Prostate gland (tissue), 2 donors: ENCODE measurements at regions of chr7 and their contacts with region 1.

Region 1: GRCh38 chr7:32803406-32804141 is 88.0 kb downstream of the KBTBD2 start:
- DNase-seq: no peak
- H3K4me3 ChIP-seq: no peak overlapping the region
- H3K27ac ChIP-seq: no peak overlapping the region
- H3K4me1 ChIP-seq: no peaks in the 10 kb centered on the region
- H3K27me3 ChIP-seq: no peaks in the 10 kb centered on the region
- CTCF ChIP-seq: no peak
- POLR2A ChIP-seq: no peak

Region 2: DNA sequence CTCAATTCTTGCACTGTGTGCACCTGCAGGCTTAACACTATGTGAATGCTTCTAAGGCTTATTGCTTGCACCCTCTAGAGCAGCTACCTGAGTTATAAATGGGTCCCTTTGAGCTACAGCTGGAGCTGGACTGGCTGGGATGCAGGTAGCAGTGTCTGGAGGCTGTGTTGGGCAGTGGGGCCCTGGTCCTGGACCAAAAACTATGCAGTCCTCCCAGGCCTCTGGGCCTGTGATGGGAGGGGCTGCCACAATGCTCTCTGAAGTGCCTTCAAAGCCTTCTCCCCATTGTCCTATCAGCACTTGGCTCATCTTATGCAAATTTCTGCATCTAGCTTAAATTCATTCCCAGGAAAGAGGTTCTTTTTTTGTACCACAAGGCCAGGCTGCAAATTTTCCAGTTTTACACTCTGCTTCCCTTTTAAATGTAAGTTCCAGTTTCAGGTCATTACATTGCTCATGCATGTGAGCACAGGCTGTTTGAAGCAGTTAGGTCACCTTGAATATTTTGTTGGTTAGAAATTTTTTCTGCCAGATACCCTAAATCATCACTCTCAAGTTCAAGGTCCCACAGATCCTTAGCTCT is 62.0 kb after region 1 on chr7:
- intact Hi-C with region 1: no loop called
- DNase-seq: no peak
- H3K4me3 ChIP-seq: no peak overlapping the region
- H3K27ac ChIP-seq: no peak overlapping the region
- H3K4me1 ChIP-seq: no peaks in the 10 kb centered on the region
- H3K27me3 ChIP-seq: no peaks in the 10 kb centered on the region
- CTCF ChIP-seq: no peak
- POLR2A ChIP-seq: no peak

Region 3: DNA sequence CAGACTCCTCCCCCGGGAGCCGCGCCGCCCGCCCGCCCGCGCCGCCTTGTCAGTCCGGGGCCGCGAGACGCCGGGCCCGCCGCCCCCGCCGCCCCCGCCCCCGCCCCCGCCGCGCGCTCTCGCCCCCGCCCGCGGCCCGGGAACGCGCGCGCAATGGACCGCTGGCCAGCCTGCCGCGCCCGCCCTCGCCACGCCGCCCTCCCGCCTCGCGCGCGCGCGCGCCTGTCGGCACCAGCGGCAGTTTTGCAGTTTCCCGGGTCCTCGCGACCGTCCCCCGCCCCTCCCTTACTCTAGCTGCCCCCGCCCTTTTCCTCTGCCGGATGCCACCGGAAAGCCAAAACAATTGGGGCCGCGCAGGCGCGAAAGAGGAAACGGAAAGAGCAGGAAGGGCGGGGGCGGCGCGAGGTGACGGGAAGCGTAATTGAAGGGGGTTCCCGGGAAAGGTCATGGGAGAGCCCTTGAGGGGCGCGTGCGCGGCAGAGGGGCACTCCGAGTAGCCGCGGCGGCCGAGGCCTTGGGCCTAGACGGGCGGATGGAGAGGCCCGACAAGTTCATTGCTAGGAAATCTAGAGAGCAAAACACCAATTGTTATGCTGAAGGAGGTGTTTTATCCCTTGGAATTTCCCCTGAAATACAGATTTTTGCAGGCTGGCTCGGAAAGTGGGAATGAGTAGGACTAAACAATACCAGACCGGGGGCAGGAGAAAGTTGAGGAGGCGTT is 88.4 kb after region 1 on chr7:
- intact Hi-C with region 1: loop called (anchors 10 kb)
- DNase-seq: peak; percentile 96
- H3K4me3 ChIP-seq: peak overlapping the region; percentile 94 to 99
- H3K27ac ChIP-seq: peak overlapping the region; percentile 99
- H3K4me1 ChIP-seq: peaks cover 5% of the 10 kb centered on the region
- H3K27me3 ChIP-seq: no peaks in the 10 kb centered on the region
- CTCF ChIP-seq: no peak
- POLR2A ChIP-seq: peak; percentile 70

Region 4: DNA sequence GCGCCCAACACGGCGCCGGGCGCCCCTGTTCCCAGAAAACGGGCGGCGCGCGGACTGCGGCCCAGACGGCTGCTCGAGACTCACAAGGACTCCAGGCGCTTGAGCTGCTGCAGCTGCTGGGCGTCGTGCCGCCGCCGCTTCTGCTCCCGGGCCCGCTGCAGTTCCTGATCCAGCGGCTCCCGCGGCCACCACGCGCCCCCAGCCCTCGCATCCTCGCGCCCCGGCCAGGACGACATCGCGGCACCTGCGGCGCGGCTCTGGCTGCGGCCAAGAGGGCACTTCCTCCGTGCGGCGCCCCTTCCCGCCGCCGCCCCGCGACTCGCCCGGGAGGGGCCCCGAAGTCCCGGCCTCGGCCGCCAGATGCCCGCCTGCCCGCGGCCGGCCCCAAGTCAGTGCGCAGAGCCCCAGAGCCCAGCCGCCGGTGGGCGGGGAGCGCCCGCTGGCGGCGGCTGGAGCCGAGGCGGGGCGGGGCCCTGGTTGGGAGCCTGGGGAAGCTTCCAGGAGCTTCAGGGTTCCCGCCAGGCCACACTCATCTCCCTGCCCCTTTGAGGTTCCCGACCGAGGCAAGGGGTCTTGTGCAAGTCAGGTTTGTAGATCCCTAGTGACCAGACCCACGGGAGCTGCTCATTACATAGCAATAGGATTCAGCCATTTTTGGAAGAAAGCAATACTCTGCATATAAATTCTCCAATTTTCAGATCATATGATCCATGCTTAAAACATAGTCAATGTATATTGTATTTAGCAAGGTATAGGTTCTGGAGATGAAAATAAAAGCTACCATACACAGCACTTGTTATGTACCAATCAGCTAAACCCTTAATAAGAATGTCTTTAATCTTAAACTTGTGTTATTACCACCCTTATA is 139.4 kb after region 1 on chr7:
- intact Hi-C with region 1: loop called (anchors 5 kb)
- DNase-seq: peak; percentile 67
- H3K4me3 ChIP-seq: peak overlapping the region; percentile 72 to 82
- H3K27ac ChIP-seq: peak overlapping the region; percentile 86 to 95
- H3K4me1 ChIP-seq: no peaks in the 10 kb centered on the region
- H3K27me3 ChIP-seq: no peaks in the 10 kb centered on the region
- CTCF ChIP-seq: peak; percentile 58 to 76 (median 64)
- POLR2A ChIP-seq: peak; percentile 47

Region 5: GRCh38 chr7:33109005-33109757 is 305.6 kb after region 1 on chr7 and contains the start of gene RP9:
- intact Hi-C with region 1: loop called (anchors 2 kb)
- DNase-seq: peak; percentile 44
- H3K4me3 ChIP-seq: peak within 1 kb of the TSS; percentile 97 to 99
- H3K27ac ChIP-seq: peak within 1 kb of the TSS; percentile 65 to 73
- H3K4me1 ChIP-seq: peaks cover 5% of the 10 kb centered on the region
- H3K27me3 ChIP-seq: no peaks in the 10 kb centered on the region
- CTCF ChIP-seq: peak; percentile 39 to 69 (median 50)
- POLR2A ChIP-seq: no peak
- total RNA-seq, gene RP9: 7.8 to 18.0 TPM